Adrenal gland (tissue), 19 donors: ENCODE measurements at regions of chr2 and their contacts with region 1.

Region 1: GRCh38 chr2:137838255-137839092 is 125.8 kb upstream of the HNMT start:
- DNase-seq: peak in 1 of 7 donors; percentile 11
- H3K4me3 ChIP-seq: no peak overlapping the region
- H3K27ac ChIP-seq: no peak overlapping the region
- H3K4me1 ChIP-seq: no peaks in the 10 kb centered on the region
- H3K27me3 ChIP-seq: no peaks in the 10 kb centered on the region
- CTCF ChIP-seq: peak; percentile 61 to 83 (median 70)
- POLR2A ChIP-seq: no peak

Region 2: DNA sequence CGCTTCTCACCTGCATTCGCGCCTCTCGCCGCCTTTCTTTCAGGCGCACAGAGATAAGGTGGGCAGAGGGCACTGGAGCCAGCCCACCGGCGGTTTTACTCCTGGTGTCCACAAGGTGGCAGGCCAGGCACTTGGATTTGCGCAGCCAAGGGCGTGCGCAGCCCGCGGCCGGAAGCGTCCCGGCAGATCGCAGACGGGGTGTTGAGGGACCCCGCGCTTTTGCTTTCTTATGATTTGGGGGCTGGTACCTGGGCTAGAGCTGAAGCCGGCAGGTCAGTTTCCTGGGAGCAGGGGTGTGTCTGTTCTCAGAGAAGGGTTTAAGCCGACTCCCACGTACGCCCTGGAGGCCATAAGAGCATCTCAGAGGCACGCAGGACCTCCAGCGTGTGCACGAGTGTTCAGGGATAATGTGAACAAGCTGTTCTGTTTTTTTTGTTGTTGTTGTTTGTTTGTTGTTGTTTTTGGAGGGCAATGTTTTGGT is 1414.9 kb before region 1 on chr2:
- intact Hi-C with region 1: loop called in 1 of 2 experiments (anchors 5 kb)
- DNase-seq: peak; percentile 49 to 78 (median 72)
- H3K4me3 ChIP-seq: peak overlapping the region in 2 of 4 donors; percentile 21 to 56
- H3K27ac ChIP-seq: no peak overlapping the region
- H3K4me1 ChIP-seq: peaks cover 2 to 4% of the 10 kb centered on the region in 2 donors
- H3K27me3 ChIP-seq: peaks cover 6% of the 10 kb centered on the region
- CTCF ChIP-seq: peak; percentile 68 to 83 (median 80)
- POLR2A ChIP-seq: no peak

Region 3: DNA sequence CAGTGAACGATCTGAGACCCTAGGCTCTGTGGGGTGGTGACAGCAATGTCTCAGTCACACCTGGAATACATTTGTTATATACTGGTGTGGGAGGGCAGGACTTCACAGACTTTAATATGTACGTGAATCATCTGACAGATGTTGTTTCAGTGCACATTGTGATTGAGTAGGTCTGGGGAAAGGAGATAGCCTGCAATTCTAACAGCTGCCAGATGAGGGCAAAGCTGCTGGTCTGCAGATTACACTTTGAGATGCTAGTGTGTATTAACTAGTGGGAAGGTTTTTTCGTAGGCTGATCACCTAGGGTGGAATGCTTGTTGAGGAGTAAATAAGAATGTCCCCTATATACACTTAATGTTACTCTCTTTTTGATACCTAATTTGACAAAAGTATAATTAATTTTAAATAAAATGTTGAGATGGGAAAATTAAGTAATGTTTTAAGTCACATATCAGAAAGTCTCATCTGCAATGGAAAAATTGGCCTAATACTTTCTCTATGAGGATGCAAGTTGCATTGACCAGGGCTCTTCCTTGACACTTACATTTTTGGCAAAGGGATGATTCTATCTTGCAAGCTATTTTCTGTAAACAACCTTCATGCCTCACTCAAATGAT is 371.1 kb before region 1 on chr2:
- intact Hi-C with region 1: loop called in 1 of 2 experiments (anchors 5 kb)
- DNase-seq: peak in 6 of 7 donors; percentile 24 to 59 (median 28)
- H3K4me3 ChIP-seq: no peak overlapping the region
- H3K27ac ChIP-seq: no peak overlapping the region
- H3K4me1 ChIP-seq: no peaks in the 10 kb centered on the region
- H3K27me3 ChIP-seq: no peaks in the 10 kb centered on the region
- CTCF ChIP-seq: peak in 5 of 6 experiments; percentile 32 to 50 (median 42)
- POLR2A ChIP-seq: no peak